HepG2 (cell line): ENCODE measurements at regions of chrX and their contacts with region 1.

Region 1: GRCh38 chrX:57121162-57121741 is at the start of gene SPIN2B:
- DNase-seq: peak; percentile 83
- ATAC-seq: peak; percentile 99
- H3K4me3 ChIP-seq: peak within 1 kb of the TSS; percentile 57 to 80 (median 59)
- H3K27ac ChIP-seq: peak within 1 kb of the TSS; percentile 85
- H3K4me1 ChIP-seq: no peaks in the 10 kb centered on the region
- H3K27me3 ChIP-seq: no peaks in the 10 kb centered on the region
- CTCF ChIP-seq: peak; percentile 56
- EP300 ChIP-seq: no peak
- POLR2A ChIP-seq: peak; percentile 91 to 94
- RAD21 ChIP-seq: no peak
- total RNA-seq, gene SPIN2B: 8.7 and 10.4 TPM in 2 replicates

Region 2: DNA sequence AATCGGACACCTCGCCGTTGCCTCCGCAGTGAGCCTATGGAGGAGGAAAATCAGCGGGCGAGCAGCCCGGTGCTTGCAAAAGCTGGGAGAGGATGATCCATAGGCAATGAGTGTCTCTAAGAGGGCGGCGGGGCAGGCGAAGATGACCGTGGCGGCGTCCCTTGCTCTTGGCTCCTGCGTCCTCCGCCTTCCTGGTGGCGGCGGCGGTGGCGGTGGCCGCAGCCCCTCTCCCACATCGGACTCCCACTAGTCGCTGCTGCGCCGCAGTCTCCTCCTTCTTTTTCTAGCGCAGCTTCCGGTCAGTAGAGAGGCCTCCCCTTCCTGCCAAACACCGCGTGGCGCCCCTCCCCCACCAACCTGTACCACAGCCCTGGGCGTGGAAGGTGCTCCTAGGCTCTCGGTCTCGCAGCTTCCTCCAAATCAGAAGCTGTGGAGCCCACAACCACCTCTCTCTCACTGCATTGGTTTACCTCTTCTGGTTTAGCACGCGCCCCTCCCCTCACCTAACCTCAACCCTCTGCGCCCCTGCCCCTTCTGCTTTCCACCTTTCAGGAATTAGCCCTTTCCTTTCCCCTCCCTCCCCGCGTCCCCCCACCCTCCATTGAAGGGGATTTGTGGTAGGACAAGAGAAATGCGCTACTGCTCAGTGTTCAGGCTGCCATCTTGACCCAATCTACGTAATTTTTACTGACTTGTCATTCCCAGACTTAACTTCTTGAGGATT is 125.8 kb before region 1 on chrX and contains the start of gene SPIN3:
- CTCF ChIA-PET with region 1: no interaction called
- POLR2A ChIA-PET with region 1: interaction called, 8 read pairs
- in situ Hi-C with region 1: no loop called
- intact Hi-C with region 1: loop called (anchors 10 kb)
- DNase-seq: peak; percentile 87
- ATAC-seq: peak; percentile 99
- H3K4me3 ChIP-seq: peak within 1 kb of the TSS; percentile 79 to 88 (median 85)
- H3K27ac ChIP-seq: peak within 1 kb of the TSS; percentile 83
- H3K4me1 ChIP-seq: peaks cover 26% of the 10 kb centered on the region
- H3K27me3 ChIP-seq: no peaks in the 10 kb centered on the region
- CTCF ChIP-seq: 0 out of 2 replicates have a peak, but pooled peaks have one; percentile 3
- EP300 ChIP-seq: 0 out of 4 replicates have a peak, but pooled peaks of 1 of the 2 experiments have one; percentile 9
- POLR2A ChIP-seq: peak; percentile 60 to 80
- RAD21 ChIP-seq: no peak
- total RNA-seq, gene SPIN3: 5.2 and 8.4 TPM in 2 replicates

Region 3: GRCh38 chrX:57156397-57157049 is 35.3 kb after region 1 on chrX:
- CTCF ChIA-PET with region 1: no interaction called
- POLR2A ChIA-PET with region 1: no interaction called
- in situ Hi-C with region 1: no loop called
- intact Hi-C with region 1: no loop called
- DNase-seq: peak; percentile 50
- ATAC-seq: peak; percentile 100
- H3K4me3 ChIP-seq: no peak overlapping the region
- H3K27ac ChIP-seq: no peak overlapping the region
- H3K4me1 ChIP-seq: peaks cover 13% of the 10 kb centered on the region; the same call in 1 of the 2 replicates
- H3K27me3 ChIP-seq: no peaks in the 10 kb centered on the region
- CTCF ChIP-seq: peak; percentile 77
- EP300 ChIP-seq: no peak
- POLR2A ChIP-seq: no peak
- RAD21 ChIP-seq: no peak; the same call in 1 of the 2 replicates